Activated CD4-positive, alpha-beta T cell treated with anti-CD3 and anti-CD28 coated beads, Interleukin-2, amount 10 ng/mL, durations not matched to agents 24 days and 14 days (primary cell): ENCODE measurements at regions of chr5 and their contacts with region 1.

Region 1: DNA sequence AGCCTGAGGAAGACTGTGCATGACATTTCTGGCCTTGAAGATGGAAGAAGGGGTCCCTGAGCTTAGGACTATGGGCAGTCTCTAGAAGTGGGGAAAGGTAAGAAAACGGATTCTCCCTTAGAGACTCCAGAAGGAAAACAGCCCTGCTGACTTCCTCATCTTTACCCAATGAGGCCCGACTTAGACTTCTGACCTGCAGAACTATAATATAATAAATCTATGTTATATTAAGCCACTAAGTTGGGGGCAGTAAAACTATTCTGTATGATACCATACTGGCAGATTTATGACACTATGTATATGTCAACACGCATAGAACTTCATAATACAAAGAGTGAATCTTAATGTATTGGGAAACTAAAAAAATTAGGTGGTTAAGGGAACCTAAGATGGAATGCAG is 422.0 kb downstream of the PLK2 start:
- DNase-seq: no peak
- H3K4me3 Mint-ChIP-seq: no peak overlapping the region
- H3K27ac Mint-ChIP-seq: no peak overlapping the region
- H3K4me1 Mint-ChIP-seq: no peaks in the 10 kb centered on the region
- H3K27me3 Mint-ChIP-seq: peaks cover 2% of the 10 kb centered on the region

Region 2: GRCh38 chr5:58025809-58026208 is 12.1 kb before region 1 on chr5:
- intact Hi-C with region 1: loop called (anchors 1 kb)
- DNase-seq: no peak
- H3K4me3 Mint-ChIP-seq: no peak overlapping the region
- H3K27ac Mint-ChIP-seq: no peak overlapping the region
- H3K4me1 Mint-ChIP-seq: no peaks in the 10 kb centered on the region
- H3K27me3 Mint-ChIP-seq: peaks cover 2% of the 10 kb centered on the region

Region 3: GRCh38 chr5:58114324-58114723 is 76.4 kb after region 1 on chr5:
- intact Hi-C with region 1: no loop called
- DNase-seq: no peak
- H3K4me3 Mint-ChIP-seq: no peak overlapping the region
- H3K27ac Mint-ChIP-seq: no peak overlapping the region
- H3K4me1 Mint-ChIP-seq: no peaks in the 10 kb centered on the region
- H3K27me3 Mint-ChIP-seq: no peaks in the 10 kb centered on the region